Activated T-helper 2 cell treated with anti-CD3 and anti-CD28 coated beads, Interferon-gamma antibody, Interleukin-2, Interleukin-4, amounts not matched to agents 10 μg/mL and 5 μg/mL and 100 μg/mL, durations not matched to agents 14 hours and 24 hours and 36 hours (primary cell): ENCODE measurements at regions of chr2 and their contacts with region 1.

Region 1: GRCh38 chr2:239934571-239935171 is 90.5 kb downstream of the NDUFA10 start:
- DNase-seq: peak; percentile 47
- H3K4me3 Mint-ChIP-seq: no peak overlapping the region
- H3K27ac Mint-ChIP-seq: no peak overlapping the region
- H3K4me1 Mint-ChIP-seq: peaks cover 4% of the 10 kb centered on the region
- H3K27me3 Mint-ChIP-seq: no peaks in the 10 kb centered on the region

Region 2: GRCh38 chr2:238370823-238371372 is 1563.8 kb before region 1 on chr2:
- intact Hi-C with region 1: no loop called
- DNase-seq: peak; percentile 30
- H3K4me3 Mint-ChIP-seq: no peak overlapping the region
- H3K27ac Mint-ChIP-seq: no peak overlapping the region
- H3K4me1 Mint-ChIP-seq: peaks cover 3% of the 10 kb centered on the region
- H3K27me3 Mint-ChIP-seq: peaks cover 3% of the 10 kb centered on the region

Region 3: DNA sequence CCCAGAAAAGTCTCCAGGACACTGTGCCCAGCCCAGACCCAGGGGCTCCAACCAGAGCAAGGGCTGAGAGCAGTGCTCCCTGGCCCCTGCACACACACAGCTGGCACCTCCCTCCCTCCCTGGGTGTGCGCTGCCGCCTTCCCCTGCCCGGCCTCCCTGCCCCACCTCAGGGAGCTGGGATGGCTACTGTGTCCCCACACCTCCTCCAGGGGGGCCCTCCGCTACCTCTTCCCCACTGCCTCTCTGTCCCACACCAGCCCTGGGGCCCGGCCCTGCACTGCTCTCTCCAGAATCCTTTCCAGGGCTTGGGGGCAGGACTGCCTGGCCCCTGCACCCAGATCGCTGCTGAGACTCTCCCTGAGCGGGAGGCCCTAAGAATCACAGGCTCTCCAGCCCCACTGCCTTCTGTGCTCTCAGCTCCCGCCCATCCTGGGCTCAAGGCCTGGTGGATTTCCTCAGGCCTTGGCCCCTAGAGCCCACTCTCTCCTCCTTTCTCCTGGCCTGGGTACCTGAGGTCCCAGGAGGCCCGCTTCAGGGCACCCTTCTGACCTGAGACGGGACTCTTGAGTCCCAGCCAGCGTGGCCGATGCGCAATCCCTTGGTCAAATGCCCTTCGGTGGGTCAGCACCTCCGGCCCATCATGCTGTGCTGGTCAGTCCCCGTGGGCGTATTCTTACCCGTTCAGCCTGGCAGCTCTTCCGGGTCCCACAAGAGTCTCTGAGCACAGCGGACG is 257.1 kb before region 1 on chr2:
- intact Hi-C with region 1: no loop called
- DNase-seq: no peak
- H3K4me3 Mint-ChIP-seq: no peak overlapping the region
- H3K27ac Mint-ChIP-seq: no peak overlapping the region
- H3K4me1 Mint-ChIP-seq: no peaks in the 10 kb centered on the region
- H3K27me3 Mint-ChIP-seq: peaks cover 17% of the 10 kb centered on the region

Region 4: DNA sequence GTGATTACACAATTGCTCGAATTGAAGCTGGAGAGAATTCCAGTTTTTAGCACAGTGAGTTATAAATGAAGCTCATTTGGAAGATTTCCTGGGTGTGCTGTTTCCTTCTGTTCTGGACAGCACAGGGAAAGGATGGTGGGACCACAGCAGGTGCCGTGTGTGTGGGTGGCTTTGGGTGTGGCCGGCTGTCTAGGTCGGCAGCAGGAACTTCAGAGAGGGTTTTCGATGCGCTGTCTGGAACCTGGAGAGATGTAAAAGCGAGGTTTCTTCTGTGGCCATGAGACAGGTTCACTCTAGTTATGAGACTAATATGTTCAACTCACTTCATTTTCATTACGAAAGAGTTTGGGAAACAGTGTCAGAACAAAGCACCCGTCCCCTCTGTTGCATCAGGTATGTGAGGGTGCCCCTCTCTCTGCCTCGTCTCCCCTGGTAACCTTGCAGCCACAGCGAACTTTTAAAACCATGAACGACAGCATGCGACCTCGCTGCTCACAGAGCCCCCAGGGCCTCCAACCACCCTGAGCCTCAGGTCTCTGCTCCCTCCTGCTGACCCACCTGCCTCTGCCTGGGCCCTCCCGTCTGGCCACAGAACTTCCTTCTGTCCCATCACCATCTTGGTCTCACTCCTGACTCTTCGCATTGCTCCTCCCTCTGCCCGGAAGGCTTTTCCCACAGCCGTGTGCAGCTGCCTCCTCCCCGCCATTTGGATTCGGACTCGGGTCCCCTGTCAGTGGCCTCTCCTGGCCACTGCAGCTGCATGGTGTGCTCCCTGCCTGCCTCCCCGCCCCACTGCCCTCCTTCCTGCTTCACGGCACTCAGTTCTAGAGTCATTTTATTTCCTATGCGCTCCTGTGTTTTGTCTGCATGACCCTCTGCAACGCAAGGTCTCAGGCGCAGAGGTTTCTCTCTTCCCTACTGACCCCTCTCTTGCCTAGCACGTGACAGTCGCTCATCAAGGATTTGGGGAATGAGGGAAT is 60.7 kb before region 1 on chr2:
- intact Hi-C with region 1: no loop called
- DNase-seq: peak; percentile 4
- H3K4me3 Mint-ChIP-seq: no peak overlapping the region
- H3K27ac Mint-ChIP-seq: no peak overlapping the region
- H3K4me1 Mint-ChIP-seq: no peaks in the 10 kb centered on the region
- H3K27me3 Mint-ChIP-seq: peaks cover 4% of the 10 kb centered on the region

Region 5: DNA sequence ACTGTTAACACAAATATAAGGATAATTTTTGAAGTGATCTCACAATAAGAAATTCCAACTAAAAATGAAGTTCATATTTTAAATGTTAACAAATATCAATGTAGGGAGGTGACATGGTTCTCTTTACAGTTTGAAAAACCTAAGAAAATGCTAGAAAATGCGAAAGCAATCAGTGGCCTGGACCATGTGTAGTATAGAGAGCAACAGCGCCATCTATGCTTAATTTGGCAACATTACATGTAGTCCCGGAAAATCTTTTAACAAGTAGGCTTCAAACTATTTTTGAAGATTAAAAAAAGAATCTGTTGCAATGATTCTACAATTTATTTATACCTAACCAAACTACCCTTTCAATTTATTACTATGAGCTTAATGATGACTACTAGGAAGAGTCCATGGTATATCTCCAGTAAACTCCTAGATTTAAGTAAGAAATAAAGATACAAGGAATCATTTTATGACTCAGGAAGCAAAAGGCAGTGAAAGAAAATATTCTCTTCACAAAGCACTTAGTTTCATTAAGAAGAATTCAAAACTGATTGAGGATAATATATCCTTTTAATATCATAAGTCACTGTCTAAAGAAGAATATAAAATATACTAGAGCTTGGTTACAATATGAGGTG is 57.1 kb after region 1 on chr2:
- intact Hi-C with region 1: loop called (anchors 1 kb)
- DNase-seq: no peak
- H3K4me3 Mint-ChIP-seq: no peak overlapping the region
- H3K27ac Mint-ChIP-seq: no peak overlapping the region
- H3K4me1 Mint-ChIP-seq: no peaks in the 10 kb centered on the region
- H3K27me3 Mint-ChIP-seq: no peaks in the 10 kb centered on the region

Region 6: GRCh38 chr2:240060977-240061591 is 126.4 kb after region 1 on chr2:
- intact Hi-C with region 1: no loop called
- DNase-seq: no peak
- H3K4me3 Mint-ChIP-seq: no peak overlapping the region
- H3K27ac Mint-ChIP-seq: no peak overlapping the region
- H3K4me1 Mint-ChIP-seq: peaks cover 3% of the 10 kb centered on the region
- H3K27me3 Mint-ChIP-seq: peaks cover 24% of the 10 kb centered on the region

Region 7: DNA sequence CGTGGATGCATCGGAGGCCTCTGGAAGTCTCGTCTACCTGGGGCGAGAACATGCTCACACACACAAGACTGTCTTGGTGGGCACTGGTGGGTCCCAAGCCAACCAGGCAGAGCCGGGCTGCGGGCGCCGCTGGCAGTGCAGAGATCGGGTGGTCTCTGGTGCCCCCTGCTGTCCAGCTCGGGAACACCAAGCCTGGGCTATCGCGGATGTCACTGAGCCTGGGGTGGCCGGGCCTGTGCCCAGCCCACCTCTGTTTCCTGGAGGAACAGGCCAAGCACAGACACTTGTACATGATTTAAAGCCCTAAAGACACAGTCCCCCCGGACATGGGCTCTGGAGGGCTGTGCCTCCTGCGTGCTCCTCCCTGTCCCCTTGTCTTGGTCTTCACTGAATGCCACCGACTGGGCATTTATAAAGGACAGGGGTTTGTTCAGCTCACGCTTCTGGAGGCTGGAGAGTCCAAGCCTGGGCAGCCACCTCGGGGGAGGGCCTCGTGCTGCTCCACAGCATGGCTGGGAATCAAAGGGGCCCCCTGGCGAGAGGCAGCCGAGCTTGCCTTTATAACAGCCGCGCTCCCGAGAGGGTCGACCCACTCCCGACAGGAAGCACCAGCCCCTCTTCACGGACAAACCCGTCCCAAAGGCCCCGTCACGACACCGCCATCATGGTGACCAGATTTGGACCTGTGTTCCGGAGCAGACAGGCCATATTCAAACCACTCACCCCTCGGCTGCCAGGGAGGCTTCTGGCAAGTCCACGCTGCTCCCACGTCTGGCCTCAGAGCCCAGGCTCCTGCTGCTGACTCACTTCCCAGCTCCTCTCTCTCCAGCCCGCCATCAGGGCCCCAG is 209.4 kb after region 1 on chr2:
- intact Hi-C with region 1: loop called (anchors 1 kb)
- DNase-seq: peak; percentile 69
- H3K4me3 Mint-ChIP-seq: no peak overlapping the region
- H3K27ac Mint-ChIP-seq: no peak overlapping the region
- H3K4me1 Mint-ChIP-seq: no peaks in the 10 kb centered on the region
- H3K27me3 Mint-ChIP-seq: no peaks in the 10 kb centered on the region